Ovary (tissue), 10 donors: ENCODE measurements at regions of chr2 and their contacts with region 1.

Region 1: GRCh38 chr2:74482801-74483674 is at the starts of genes CCDC142 and TTC31:
- DNase-seq: peak; percentile 94 to 97 (median 94)
- H3K4me3 ChIP-seq: peak within 1 kb of the TSS; percentile 48
- H3K27ac ChIP-seq: peak within 1 kb of the TSS; percentile 86 to 87
- H3K4me1 ChIP-seq: peaks cover 8% of the 10 kb centered on the region
- H3K27me3 ChIP-seq: no peaks in the 10 kb centered on the region
- CTCF ChIP-seq: peak; percentile 76 to 87 (median 83)
- EP300 ChIP-seq: peak; percentile 24
- POLR2A ChIP-seq: peak; percentile 53
- total RNA-seq, gene CCDC142: 13.1 to 31.1 (median 23.4) TPM
- total RNA-seq, gene TTC31: 15.1 to 21.7 (median 15.7) TPM

Region 2: GRCh38 chr2:74374509-74375205 is 108.4 kb before region 1 on chr2:
- intact Hi-C with region 1: no loop called
- DNase-seq: peak in 3 of 5 donors; percentile 29 to 62 (median 43)
- H3K4me3 ChIP-seq: peak overlapping the region; percentile 30
- H3K27ac ChIP-seq: no peak overlapping the region
- H3K4me1 ChIP-seq: peaks cover 3% of the 10 kb centered on the region
- H3K27me3 ChIP-seq: no peaks in the 10 kb centered on the region
- CTCF ChIP-seq: no peak
- EP300 ChIP-seq: no peak
- POLR2A ChIP-seq: no peak

Region 3: DNA sequence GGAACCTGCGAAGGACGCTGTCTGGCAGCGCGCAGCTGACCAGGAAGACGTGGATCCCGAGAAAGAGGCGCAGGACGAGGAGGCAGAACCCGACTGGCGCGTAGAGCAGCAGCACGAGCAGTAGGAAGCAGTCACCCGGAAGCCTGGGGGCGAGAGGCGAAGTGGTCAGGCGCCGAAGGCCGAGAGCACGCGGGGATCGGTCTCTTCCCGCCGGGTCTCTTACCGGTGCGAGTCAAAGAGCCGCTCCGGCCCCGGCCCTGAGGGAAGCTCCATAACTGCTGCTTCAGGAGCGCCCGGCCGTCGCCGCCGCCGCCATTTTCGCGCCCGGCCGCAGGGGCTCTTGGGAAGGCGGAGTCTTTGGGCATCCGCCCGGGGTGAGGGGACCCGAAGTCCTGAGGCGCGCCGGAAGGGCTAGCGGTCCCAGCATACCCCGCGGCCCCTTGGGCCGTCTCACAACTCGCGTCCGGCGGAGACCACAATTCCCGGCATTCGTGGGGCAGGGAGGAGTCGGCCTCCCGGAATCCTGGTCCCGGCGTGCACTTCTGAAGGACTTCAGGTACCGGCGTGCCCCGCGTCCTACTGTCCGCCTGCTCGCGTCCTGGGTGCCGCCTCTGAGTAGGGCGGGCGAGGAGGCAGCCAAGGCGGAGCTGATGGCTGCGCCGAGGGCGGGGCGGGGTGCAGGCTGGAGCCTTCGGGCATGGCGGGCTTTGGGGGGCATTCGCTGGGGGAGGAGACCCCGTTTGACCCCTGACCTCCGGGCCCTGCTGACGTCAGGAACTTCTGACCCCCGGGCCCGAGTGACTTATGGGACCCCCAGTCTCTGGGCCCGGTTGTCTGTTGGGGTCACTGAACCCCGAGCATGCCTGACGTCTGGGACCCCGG is 46.6 kb after region 1 on chr2 and contains the starts of genes AUP1 and HTRA2:
- intact Hi-C with region 1: loop called in 1 of 4 experiments (anchors 5 kb)
- DNase-seq: peak; percentile 96 to 98 (median 97)
- H3K4me3 ChIP-seq: peak within 1 kb of the TSS; percentile 92
- H3K27ac ChIP-seq: peak within 1 kb of the TSS in 1 of 2 donors; percentile 70
- H3K4me1 ChIP-seq: peaks cover 13% of the 10 kb centered on the region
- H3K27me3 ChIP-seq: no peaks in the 10 kb centered on the region
- CTCF ChIP-seq: no peak
- EP300 ChIP-seq: peak; percentile 79
- POLR2A ChIP-seq: peak; percentile 85
- total RNA-seq, gene AUP1: 57.1 to 101 (median 70.4) TPM
- total RNA-seq, gene HTRA2: 28.7 to 47.6 (median 36.4) TPM

Region 4: DNA sequence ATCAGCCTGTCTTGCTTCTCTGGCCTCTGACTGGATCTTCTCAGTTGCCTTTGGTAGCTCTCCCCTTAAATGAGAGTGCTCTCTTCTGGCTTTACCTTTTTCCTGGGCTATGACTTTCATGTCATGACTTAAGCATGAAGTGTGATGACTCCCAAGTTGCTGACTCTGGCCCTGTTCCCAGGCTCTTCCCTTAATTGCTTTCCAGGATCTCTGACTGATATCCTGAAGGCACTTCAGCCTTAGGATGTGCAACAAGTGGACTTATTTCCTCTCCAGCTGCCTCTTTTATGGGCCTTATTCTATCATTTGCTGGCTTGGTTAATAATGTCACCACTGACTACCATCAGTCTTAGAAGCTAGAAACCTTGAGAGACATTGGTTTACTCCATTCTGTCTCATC is 188.4 kb after region 1 on chr2:
- intact Hi-C with region 1: no loop called
- DNase-seq: no peak
- H3K4me3 ChIP-seq: no peak overlapping the region
- H3K27ac ChIP-seq: no peak overlapping the region
- H3K4me1 ChIP-seq: no peaks in the 10 kb centered on the region
- H3K27me3 ChIP-seq: no peaks in the 10 kb centered on the region
- CTCF ChIP-seq: no peak
- EP300 ChIP-seq: no peak
- POLR2A ChIP-seq: no peak